ENCODE measurements at regions of chr3 and their contacts with region 1.

Region 1: DNA sequence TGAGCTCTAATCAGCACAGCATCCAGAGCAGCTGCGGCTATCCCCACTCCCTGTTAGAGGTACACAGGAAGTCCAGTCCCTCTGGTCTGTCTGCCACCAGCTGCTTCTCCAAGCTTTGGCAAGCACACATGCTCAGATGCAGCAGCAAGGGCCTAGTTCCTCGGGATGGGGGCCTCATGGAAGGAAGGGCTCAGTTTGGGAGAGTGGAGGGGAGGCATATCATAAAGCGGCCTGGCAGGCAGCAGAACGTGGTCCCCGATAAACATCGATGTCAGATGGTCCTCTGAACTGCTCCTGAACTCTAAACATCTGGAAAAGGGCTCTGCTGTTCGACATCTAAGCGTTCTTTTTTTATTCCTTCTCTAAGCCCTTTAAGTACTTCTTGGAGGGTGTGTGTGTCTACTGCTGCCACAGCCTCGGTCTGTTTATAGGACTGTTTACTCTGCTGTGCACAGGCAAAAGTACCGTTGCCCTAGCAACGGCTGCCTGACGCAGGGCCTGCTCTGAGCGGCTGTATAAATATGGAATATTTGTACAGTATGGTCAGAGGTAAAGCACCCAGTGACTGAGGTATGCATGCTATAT is 74.6 kb downstream of the PRICKLE2 start:
- DNase-seq: no peak
- CTCF ChIP-seq: no peak

Region 2: GRCh38 chr3:64163755-64164148 is 13.0 kb after region 1 on chr3:
- CTCF ChIA-PET with region 1: interaction called, 12 read pairs
- POLR2A ChIA-PET with region 1: no interaction called
- DNase-seq: peak; percentile 17
- CTCF ChIP-seq: no peak

Region 3: DNA sequence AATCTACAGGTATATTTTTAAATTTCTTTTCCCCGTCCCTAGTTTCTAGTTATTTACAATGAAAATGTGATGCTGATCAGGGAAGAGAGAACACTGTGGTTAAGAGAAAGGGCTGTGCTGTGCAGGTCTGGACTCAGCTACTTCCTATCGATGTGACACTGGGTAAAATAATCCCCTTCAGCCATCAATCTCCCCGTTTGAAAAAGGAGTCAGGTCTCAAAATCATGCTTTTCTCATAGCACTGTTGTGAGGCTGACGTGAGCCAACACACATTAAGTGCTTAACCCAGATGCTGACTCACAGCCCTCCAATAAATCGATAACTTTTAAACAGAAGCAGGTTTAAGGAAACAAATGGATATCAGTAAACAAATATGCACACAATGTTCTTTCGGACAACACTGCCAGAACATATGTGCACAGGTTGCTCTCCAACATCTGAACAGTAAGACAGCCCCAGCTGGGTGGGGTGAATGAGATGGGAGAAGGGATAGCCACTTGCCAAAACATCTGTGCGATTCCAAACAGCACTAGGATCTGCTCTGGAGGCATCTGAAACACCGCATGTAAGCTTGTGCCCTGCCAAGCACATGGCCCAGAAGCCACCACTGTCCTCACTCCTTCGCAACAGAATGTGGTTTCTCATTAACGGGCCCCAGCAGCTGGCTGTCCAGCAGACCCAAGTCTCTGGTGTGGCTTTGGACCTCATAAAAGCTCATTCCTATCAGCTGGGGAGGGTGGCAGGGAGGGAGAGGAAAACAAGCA is 217.7 kb after region 1 on chr3:
- CTCF ChIA-PET with region 1: no interaction called
- POLR2A ChIA-PET with region 1: no interaction called
- DNase-seq: no peak
- CTCF ChIP-seq: no peak